Activated CD4-positive, alpha-beta memory T cell treated with anti-CD3 and anti-CD28 coated beads, Interleukin-2, amount 10 ng/mL, durations not matched to agents 7 days and 5 days (primary cell): ENCODE measurements at regions of chr4 and their contacts with region 1.

Region 1: DNA sequence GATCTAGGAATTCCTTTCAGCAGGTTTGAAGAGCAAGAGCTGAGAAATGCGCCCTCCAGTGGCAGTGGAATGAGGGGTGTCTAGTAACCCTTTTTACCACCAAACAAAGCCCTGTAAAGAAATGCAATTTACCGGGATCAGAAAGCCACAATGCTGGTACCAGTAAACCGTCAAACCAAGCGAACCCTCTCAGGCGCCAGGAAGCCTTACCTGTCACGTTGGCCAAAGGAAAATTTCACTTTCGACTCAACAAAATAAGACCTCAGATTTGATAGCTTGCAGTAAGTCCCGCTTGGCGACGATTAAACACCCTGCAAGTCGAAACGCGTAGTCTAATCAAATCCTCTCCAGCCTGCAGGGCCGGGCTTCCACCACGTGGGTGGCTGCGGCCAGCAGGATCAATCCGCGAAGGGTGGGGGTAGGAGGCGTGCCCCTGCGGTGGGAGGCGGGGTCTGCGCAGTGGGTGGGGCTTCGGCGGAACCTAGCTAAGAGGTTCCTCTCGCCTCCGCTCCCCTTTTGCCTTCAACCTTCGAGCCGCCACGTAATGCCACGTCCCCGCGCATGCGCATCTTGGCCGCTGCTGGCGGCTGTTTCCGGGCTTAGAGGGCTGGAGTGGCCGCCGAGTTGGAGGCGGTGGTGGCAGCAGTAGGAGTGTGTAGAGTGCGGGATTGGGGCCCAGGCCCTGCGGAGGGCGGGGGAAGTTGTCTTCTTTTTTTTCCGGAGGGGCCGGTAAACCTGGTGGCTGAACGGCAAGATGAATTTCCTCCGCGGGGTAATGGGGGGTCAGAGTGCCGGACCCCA is at the start of gene USO1:
- DNase-seq: peak; percentile 100
- H3K4me3 Mint-ChIP-seq: peak within 1 kb of the TSS; percentile 100
- H3K27ac Mint-ChIP-seq: peak within 1 kb of the TSS; percentile 99
- H3K4me1 Mint-ChIP-seq: peaks cover 56% of the 10 kb centered on the region
- H3K27me3 Mint-ChIP-seq: no peaks in the 10 kb centered on the region
- total RNA-seq, gene USO1: 43.4 to 45.9 TPM

Region 2: DNA sequence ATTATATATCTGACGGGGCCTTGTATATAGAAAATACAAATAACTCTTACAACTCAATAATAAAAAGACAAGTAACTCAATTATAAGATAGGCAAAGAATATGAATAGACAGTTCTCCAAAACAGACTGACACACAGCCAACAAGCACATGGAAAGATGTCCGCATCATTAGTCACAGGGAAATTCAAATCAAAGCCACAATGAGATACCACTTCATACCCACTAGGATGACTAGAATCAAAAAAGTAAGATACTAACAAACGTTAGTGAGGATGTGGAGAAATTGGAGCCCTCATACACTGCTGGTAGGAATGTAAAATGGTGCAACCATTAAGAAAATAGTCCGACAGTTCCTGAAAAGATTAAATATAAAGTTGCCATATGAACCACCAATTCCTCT is 325.8 kb before region 1 on chr4:
- CTCF ChIA-PET with region 1: no interaction called
- POLR2A ChIA-PET with region 1: no interaction called
- DNase-seq: no peak
- H3K4me3 Mint-ChIP-seq: no peak overlapping the region
- H3K27ac Mint-ChIP-seq: no peak overlapping the region
- H3K4me1 Mint-ChIP-seq: no peaks in the 10 kb centered on the region
- H3K27me3 Mint-ChIP-seq: peaks cover 3% of the 10 kb centered on the region

Region 3: DNA sequence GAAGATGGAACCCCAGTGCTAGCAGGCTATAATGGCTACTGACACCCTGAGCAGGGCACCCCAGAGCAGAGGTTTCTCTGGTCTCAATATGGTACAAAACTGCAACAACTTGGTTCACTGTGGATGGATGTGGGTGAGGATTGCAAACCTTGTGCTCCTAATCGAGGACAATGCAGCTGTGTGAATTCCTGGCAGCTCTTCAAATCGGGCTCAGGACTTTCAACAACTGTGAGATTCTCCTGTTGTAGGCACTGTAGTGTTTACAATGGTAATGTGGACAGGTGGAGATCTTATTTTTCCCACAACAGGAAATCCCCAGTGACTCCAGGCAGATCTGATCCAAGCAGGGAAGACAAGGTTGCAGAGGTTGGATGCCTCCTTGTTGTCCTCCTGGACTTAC is 311.5 kb before region 1 on chr4:
- CTCF ChIA-PET with region 1: no interaction called
- POLR2A ChIA-PET with region 1: no interaction called
- DNase-seq: no peak
- H3K4me3 Mint-ChIP-seq: no peak overlapping the region
- H3K27ac Mint-ChIP-seq: no peak overlapping the region
- H3K4me1 Mint-ChIP-seq: no peaks in the 10 kb centered on the region
- H3K27me3 Mint-ChIP-seq: peaks cover 13% of the 10 kb centered on the region

Region 4: GRCh38 chr4:75630174-75630936 is 93.9 kb before region 1 on chr4 and contains the start of gene CDKL2:
- CTCF ChIA-PET with region 1: interaction called, 10 read pairs
- POLR2A ChIA-PET with region 1: interaction called, 13 read pairs
- DNase-seq: peak; percentile 92
- H3K4me3 Mint-ChIP-seq: peak within 1 kb of the TSS; percentile 84
- H3K27ac Mint-ChIP-seq: peak within 1 kb of the TSS; percentile 57
- H3K4me1 Mint-ChIP-seq: peaks cover 18% of the 10 kb centered on the region
- H3K27me3 Mint-ChIP-seq: no peaks in the 10 kb centered on the region
- total RNA-seq, gene CDKL2: 1.3 to 1.4 TPM

Region 5: DNA sequence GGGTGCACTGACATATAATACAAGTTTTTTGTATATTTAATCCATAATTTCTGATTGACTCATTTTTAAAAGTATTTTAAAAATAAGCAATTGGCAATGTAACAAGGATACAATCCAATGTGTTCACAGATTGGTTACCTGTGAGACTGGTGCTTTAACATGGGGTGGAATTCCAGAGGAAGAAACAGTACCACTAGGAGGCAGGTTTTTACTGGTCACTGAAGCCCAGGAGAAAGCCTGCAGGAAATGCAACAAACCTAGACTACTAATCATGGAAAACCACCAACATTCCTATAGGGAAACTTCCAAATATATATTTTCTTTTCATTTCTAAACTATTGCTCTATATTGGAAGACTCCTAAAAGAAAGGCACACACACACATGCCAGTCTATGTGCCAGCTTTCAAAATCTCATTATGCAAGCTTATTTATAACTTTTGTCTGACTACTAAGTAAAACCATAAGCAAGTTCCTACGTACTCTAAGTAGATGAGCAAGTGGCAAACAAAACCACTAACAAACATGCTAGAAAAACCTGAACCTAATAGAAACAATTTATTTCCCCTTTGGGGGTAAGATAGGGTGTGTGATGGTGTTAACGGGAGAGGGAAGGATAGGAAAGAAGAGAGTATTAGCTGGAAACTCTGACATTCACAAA is 70.3 kb before region 1 on chr4:
- CTCF ChIA-PET with region 1: interaction called, 72 read pairs
- POLR2A ChIA-PET with region 1: interaction called, 78 read pairs
- DNase-seq: no peak
- H3K4me3 Mint-ChIP-seq: peak overlapping the region; percentile 43
- H3K27ac Mint-ChIP-seq: peak overlapping the region; percentile 90
- H3K4me1 Mint-ChIP-seq: peaks cover 71% of the 10 kb centered on the region
- H3K27me3 Mint-ChIP-seq: no peaks in the 10 kb centered on the region

Region 6: DNA sequence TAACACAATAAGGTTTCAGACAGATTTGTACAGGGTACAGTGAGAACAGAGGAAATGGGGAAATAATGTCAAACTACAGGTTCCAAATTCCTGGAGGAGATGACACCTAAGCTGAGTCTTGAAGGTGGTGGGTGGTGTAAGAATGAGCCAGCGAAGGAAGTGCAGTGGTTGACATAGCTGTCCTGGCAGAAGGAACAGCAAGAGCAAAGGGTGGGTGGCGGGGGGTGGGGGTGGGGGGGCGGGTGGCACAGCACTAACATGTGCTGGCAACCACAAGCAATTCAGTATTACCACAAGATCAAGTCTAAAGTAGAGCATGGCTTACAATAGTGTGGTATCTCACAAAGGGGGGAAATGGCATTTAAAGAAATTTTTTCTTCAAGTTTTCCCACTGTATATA is 37.9 kb before region 1 on chr4:
- CTCF ChIA-PET with region 1: interaction called, 7 read pairs
- POLR2A ChIA-PET with region 1: interaction called, 11 read pairs
- DNase-seq: no peak
- H3K4me3 Mint-ChIP-seq: no peak overlapping the region
- H3K27ac Mint-ChIP-seq: peak overlapping the region; percentile 5
- H3K4me1 Mint-ChIP-seq: peaks cover 34% of the 10 kb centered on the region
- H3K27me3 Mint-ChIP-seq: no peaks in the 10 kb centered on the region

Region 7: GRCh38 chr4:75844151-75844662 is 119.9 kb after region 1 on chr4:
- CTCF ChIA-PET with region 1: interaction called, 17 read pairs
- POLR2A ChIA-PET with region 1: interaction called, 3 read pairs
- DNase-seq: no peak
- H3K4me3 Mint-ChIP-seq: no peak overlapping the region
- H3K27ac Mint-ChIP-seq: no peak overlapping the region
- H3K4me1 Mint-ChIP-seq: peaks cover 12% of the 10 kb centered on the region
- H3K27me3 Mint-ChIP-seq: no peaks in the 10 kb centered on the region